ENCODE measurements at regions of chr6 and their contacts with region 1.

Region 1: GRCh38 chr6:155314092-155314772 is at the start of gene TFB1M:
- DNase-seq: peak; percentile 99
- H3K4me3 Mint-ChIP-seq: peak within 1 kb of the TSS; percentile 98
- H3K27ac Mint-ChIP-seq: peak within 1 kb of the TSS; percentile 97
- H3K4me1 Mint-ChIP-seq: peaks cover 44% of the 10 kb centered on the region
- H3K27me3 Mint-ChIP-seq: no peaks in the 10 kb centered on the region
- total RNA-seq, gene TFB1M: 27.7 and 31.2 TPM in 2 replicates

Region 2: GRCh38 chr6:154606457-154606856 is 707.8 kb before region 1 on chr6:
- intact Hi-C with region 1: loop called (anchors 2 kb)
- DNase-seq: peak; percentile 66
- H3K4me3 Mint-ChIP-seq: peak overlapping the region; percentile 65
- H3K27ac Mint-ChIP-seq: peak overlapping the region; percentile 86
- H3K4me1 Mint-ChIP-seq: peaks cover 24% of the 10 kb centered on the region
- H3K27me3 Mint-ChIP-seq: peaks cover 3% of the 10 kb centered on the region

Region 3: DNA sequence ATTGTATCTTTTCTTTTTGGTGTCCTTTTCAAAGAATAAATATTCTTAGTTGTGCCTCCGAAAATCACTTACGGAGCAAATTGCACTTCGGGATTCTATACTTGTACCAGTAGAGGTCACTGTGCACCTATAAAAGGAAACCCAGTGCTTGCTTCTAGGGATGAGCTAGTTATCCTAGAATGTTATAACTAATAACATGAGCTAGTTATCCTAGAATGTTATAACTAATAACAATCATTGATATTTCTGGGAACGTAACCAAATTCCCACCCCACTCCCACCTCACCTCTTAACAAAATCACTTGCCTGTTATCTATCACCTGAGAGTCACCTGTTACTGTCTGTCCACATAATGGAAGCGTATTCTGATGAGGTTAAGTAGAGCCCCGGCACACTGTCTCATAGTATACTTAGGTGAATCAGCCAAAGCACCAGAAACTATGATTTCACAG is 446.1 kb before region 1 on chr6:
- intact Hi-C with region 1: loop called (anchors 5 kb)
- DNase-seq: no peak
- H3K4me3 Mint-ChIP-seq: no peak overlapping the region
- H3K27ac Mint-ChIP-seq: no peak overlapping the region
- H3K4me1 Mint-ChIP-seq: peaks cover 6% of the 10 kb centered on the region
- H3K27me3 Mint-ChIP-seq: no peaks in the 10 kb centered on the region

Region 4: GRCh38 chr6:155188707-155189496 is 125.3 kb before region 1 on chr6:
- intact Hi-C with region 1: loop called (anchors 1 kb)
- DNase-seq: no peak
- H3K4me3 Mint-ChIP-seq: peak overlapping the region; percentile 52
- H3K27ac Mint-ChIP-seq: peak overlapping the region; percentile 86
- H3K4me1 Mint-ChIP-seq: peaks cover 51% of the 10 kb centered on the region
- H3K27me3 Mint-ChIP-seq: no peaks in the 10 kb centered on the region

Region 5: DNA sequence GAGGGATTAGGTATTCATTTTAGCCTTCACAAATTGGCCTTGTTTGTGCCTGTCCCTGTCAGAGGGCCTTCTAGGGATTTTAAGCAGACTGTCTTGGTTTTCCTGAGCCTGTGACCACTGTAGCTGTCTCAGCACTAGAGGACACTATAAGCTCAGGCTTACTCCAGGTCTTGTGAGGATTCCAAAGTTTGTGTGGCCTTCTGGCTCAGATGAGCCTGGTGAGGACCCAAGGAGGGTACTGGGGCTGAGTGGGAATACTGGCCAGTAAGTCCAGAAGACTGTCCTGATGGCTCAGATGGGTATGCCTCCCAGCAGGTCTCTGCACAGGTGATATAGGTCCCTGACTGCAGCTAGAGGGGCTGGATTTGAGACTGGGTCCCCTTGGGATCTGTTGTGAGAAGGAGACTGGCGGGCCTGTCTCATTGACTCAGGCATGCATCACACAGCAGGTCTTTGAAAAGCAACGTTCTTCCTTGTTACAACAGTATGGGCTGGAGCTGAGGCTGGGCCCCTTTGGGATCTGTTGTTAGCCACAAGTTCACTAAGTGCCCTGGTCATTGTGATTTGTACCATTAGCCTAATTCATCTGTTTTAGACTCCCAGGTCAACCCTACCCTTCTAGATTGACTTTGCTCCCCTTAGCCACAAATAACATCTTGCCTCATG is 26.4 kb after region 1 on chr6:
- intact Hi-C with region 1: no loop called
- DNase-seq: no peak
- H3K4me3 Mint-ChIP-seq: no peak overlapping the region
- H3K27ac Mint-ChIP-seq: no peak overlapping the region
- H3K4me1 Mint-ChIP-seq: peaks cover 20% of the 10 kb centered on the region
- H3K27me3 Mint-ChIP-seq: no peaks in the 10 kb centered on the region

Region 6: GRCh38 chr6:156686995-156687788 is 1373.0 kb after region 1 on chr6:
- intact Hi-C with region 1: loop called (anchors 2 kb)
- DNase-seq: peak; percentile 75
- H3K4me3 Mint-ChIP-seq: peak overlapping the region; percentile 92
- H3K27ac Mint-ChIP-seq: peak overlapping the region; percentile 83
- H3K4me1 Mint-ChIP-seq: peaks cover 27% of the 10 kb centered on the region
- H3K27me3 Mint-ChIP-seq: peaks cover 4% of the 10 kb centered on the region

Region 7: GRCh38 chr6:157274471-157275226 is 1960.4 kb after region 1 on chr6:
- intact Hi-C with region 1: loop called (anchors 10 kb)
- DNase-seq: peak; percentile 78
- H3K4me3 Mint-ChIP-seq: peak overlapping the region; percentile 86
- H3K27ac Mint-ChIP-seq: peak overlapping the region; percentile 67
- H3K4me1 Mint-ChIP-seq: peaks cover 4% of the 10 kb centered on the region
- H3K27me3 Mint-ChIP-seq: peaks cover 10% of the 10 kb centered on the region

Measured in activated T-helper 1 cell treated with anti-CD3 and anti-CD28 coated beads, Interleukin-12 subunit alpha, Interleukin-12 subunit beta, Interleukin-2, Interleukin-4 antibody, amounts not matched to agents 30 ng/mL and 10 ng/mL and 1 ng/mL, durations not matched to agents 14 hours and 24 hours and 36 hours (primary cell).